Panc1 (cell line): ENCODE measurements at regions of chr3 and their contacts with region 1.

Region 1: GRCh38 chr3:58167431-58168351 is 43.1 kb downstream of the DNASE1L3 start:
- DNase-seq: no peak
- ATAC-seq: peak; percentile 61
- H3K4me3 ChIP-seq: no peak overlapping the region
- H3K27ac ChIP-seq: peak overlapping the region; percentile 45; the same call in 1 of the 2 replicates
- H3K4me1 ChIP-seq: peaks cover 39% of the 10 kb centered on the region
- H3K27me3 ChIP-seq: no peaks in the 10 kb centered on the region
- CTCF ChIP-seq: peak; percentile 92

Region 2: GRCh38 chr3:58020783-58021071 is 147.0 kb before region 1 on chr3:
- CTCF ChIA-PET with region 1: interaction called, 3 read pairs
- POLR2A ChIA-PET with region 1: interaction called, 12 read pairs
- in situ Hi-C with region 1: no loop called
- intact Hi-C with region 1: no loop called
- DNase-seq: no peak
- ATAC-seq: no peak
- H3K4me3 ChIP-seq: no peak overlapping the region
- H3K27ac ChIP-seq: peak overlapping the region; percentile 75
- H3K4me1 ChIP-seq: peaks cover 80% of the 10 kb centered on the region
- H3K27me3 ChIP-seq: no peaks in the 10 kb centered on the region
- CTCF ChIP-seq: no peak

Region 3: DNA sequence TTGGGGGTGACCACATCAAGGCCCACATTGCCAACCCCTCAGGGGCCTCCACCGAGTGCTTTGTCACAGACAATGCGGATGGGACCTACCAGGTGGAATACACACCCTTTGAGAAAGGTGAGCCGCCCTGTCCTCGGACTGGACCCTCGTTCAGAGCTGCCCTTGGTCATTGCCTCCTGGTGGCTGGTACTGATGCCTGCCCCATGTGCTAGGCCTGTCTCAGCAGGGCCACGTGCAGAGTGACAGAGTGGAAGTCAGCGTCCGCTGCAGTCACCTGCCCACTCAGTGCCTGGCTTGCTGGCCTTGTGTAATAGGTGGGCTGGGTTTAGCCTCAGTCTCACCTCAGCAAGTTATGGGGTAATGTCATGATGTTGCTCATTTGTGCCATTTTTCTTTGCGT is 43.3 kb before region 1 on chr3:
- CTCF ChIA-PET with region 1: no interaction called
- POLR2A ChIA-PET with region 1: no interaction called
- in situ Hi-C with region 1: no loop called
- intact Hi-C with region 1: no loop called
- DNase-seq: no peak
- ATAC-seq: no peak
- H3K4me3 ChIP-seq: no peak overlapping the region
- H3K27ac ChIP-seq: no peak overlapping the region
- H3K4me1 ChIP-seq: no peaks in the 10 kb centered on the region
- H3K27me3 ChIP-seq: no peaks in the 10 kb centered on the region
- CTCF ChIP-seq: no peak

Region 4: GRCh38 chr3:58144478-58145325 is 23.0 kb before region 1 on chr3:
- CTCF ChIA-PET with region 1: no interaction called
- POLR2A ChIA-PET with region 1: no interaction called
- in situ Hi-C with region 1: no loop called
- intact Hi-C with region 1: no loop called
- DNase-seq: no peak
- ATAC-seq: no peak
- H3K4me3 ChIP-seq: no peak overlapping the region
- H3K27ac ChIP-seq: no peak overlapping the region
- H3K4me1 ChIP-seq: peaks cover 20% of the 10 kb centered on the region
- H3K27me3 ChIP-seq: no peaks in the 10 kb centered on the region
- CTCF ChIP-seq: no peak